Naive thymus-derived CD4-positive, alpha-beta T cell (primary cell): ENCODE measurements at regions of chr3 and their contacts with region 1.

Region 1: GRCh38 chr3:129593595-129594339 is 12.7 kb downstream of the PLXND1 start:
- DNase-seq: peak in 7 of 9 donors; percentile 30 to 65 (median 51)
- ATAC-seq: peak; percentile 68
- H3K4me3 ChIP-seq: peak overlapping the region; percentile 12
- H3K4me3 Mint-ChIP-seq: peak overlapping the region; percentile 62 to 81 (median 75)
- H3K27ac ChIP-seq: no peak overlapping the region
- H3K27ac Mint-ChIP-seq: peak overlapping the region; percentile 53 to 89 (median 71)
- H3K4me1 ChIP-seq: peaks cover 20 to 28% of the 10 kb centered on the region in 2 donors
- H3K4me1 Mint-ChIP-seq: peaks cover 14 to 38% (median 30%) of the 10 kb centered on the region in 7 donors
- H3K27me3 ChIP-seq: no peaks in the 10 kb centered on the region
- H3K27me3 Mint-ChIP-seq: peaks cover 0 to 57% (median 5%) of the 10 kb centered on the region in 5 donors

Region 2: GRCh38 chr3:129305592-129306091 is 288.1 kb before region 1 on chr3:
- CTCF ChIA-PET with region 1: no interaction called
- POLR2A ChIA-PET with region 1: no interaction called
- intact Hi-C with region 1: no loop called
- DNase-seq: peak in 2 of 9 donors; percentile 33 to 56
- ATAC-seq: peak; percentile 66
- H3K4me3 ChIP-seq: no peak overlapping the region
- H3K4me3 Mint-ChIP-seq: peak overlapping the region in 5 of 10 donors; percentile 15 to 27 (median 21)
- H3K27ac ChIP-seq: peak overlapping the region; percentile 44
- H3K27ac Mint-ChIP-seq: peak overlapping the region in 7 of 9 donors; percentile 55 to 83 (median 65)
- H3K4me1 ChIP-seq: no peaks in the 10 kb centered on the region
- H3K4me1 Mint-ChIP-seq: peaks cover 17 to 38% (median 27%) of the 10 kb centered on the region in 7 donors
- H3K27me3 ChIP-seq: no peaks in the 10 kb centered on the region
- H3K27me3 Mint-ChIP-seq: no peaks in the 10 kb centered on the region

Region 3: GRCh38 chr3:129576514-129577352 is 17.0 kb before region 1 on chr3:
- CTCF ChIA-PET with region 1: interaction called, 3 read pairs
- POLR2A ChIA-PET with region 1: interaction called, 12 read pairs
- intact Hi-C with region 1: loop called in 1 of 2 experiments (anchors 2 kb)
- DNase-seq: peak in 8 of 9 donors; percentile 27 to 81 (median 70)
- ATAC-seq: peak; percentile 84
- H3K4me3 ChIP-seq: peak overlapping the region; percentile 15
- H3K4me3 Mint-ChIP-seq: peak overlapping the region; percentile 16 to 65 (median 48)
- H3K27ac ChIP-seq: peak overlapping the region; percentile 14
- H3K27ac Mint-ChIP-seq: peak overlapping the region; percentile 67 to 96 (median 89)
- H3K4me1 ChIP-seq: peaks cover 20 to 50% of the 10 kb centered on the region in 2 donors
- H3K4me1 Mint-ChIP-seq: peaks cover 4 to 29% (median 20%) of the 10 kb centered on the region in 7 donors
- H3K27me3 ChIP-seq: no peaks in the 10 kb centered on the region
- H3K27me3 Mint-ChIP-seq: no peaks in the 10 kb centered on the region

Region 4: DNA sequence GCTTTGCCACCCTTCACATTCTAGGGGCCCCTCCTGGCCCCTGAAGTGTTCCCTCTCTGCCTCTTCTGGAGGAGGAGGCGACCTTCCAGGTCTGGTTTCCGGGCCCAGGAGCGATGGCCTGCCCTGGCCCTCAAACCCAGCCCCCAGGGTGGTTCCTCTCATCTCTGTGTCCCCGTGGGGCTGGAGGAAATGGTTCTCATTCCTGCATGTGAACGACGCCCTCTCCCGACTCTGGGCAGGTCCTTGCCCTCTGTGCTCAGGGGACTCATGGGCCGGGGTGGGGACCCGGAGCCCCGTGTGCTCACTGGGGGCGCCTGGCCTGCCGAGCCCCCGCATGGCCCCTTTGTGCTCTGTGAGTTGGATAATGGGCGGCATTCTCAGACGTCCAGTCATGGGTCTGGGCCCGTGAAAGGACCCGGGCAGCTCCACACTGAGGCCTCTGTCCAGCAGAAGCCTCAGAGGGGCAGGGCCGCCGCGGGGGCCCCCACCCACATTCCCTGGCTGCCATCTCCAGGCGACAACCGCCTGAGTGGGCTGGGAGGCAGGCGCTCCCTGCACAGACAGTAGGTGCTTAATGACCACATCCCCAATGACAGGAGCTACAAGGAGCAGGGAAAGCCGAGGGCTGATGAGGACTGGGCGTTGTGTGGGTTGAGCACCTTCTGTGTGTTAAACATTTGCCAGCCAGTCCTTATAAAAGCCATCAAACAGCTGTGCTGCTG is 18.2 kb after region 1 on chr3:
- CTCF ChIA-PET with region 1: no interaction called
- POLR2A ChIA-PET with region 1: no interaction called
- intact Hi-C with region 1: no loop called
- DNase-seq: no peak
- ATAC-seq: no peak
- H3K4me3 ChIP-seq: no peak overlapping the region
- H3K4me3 Mint-ChIP-seq: no peak overlapping the region
- H3K27ac ChIP-seq: no peak overlapping the region
- H3K27ac Mint-ChIP-seq: no peak overlapping the region
- H3K4me1 ChIP-seq: peaks cover 0 to 6% of the 10 kb centered on the region in 2 donors
- H3K4me1 Mint-ChIP-seq: peaks cover 6 to 14% (median 9%) of the 10 kb centered on the region in 7 donors
- H3K27me3 ChIP-seq: no peaks in the 10 kb centered on the region
- H3K27me3 Mint-ChIP-seq: peaks cover 0 to 26% (median 0%) of the 10 kb centered on the region in 5 donors